Natural killer cell (primary cell): ENCODE measurements at regions of chr1 and their contacts with region 1.

Region 1: GRCh38 chr1:220046052-220046930 is at the start of gene EPRS1:
- DNase-seq: peak; percentile 90 to 99
- ATAC-seq: peak; percentile 98 to 100 (median 98)
- H3K4me3 ChIP-seq: peak within 1 kb of the TSS; percentile 98
- H3K4me3 Mint-ChIP-seq: peak within 1 kb of the TSS; percentile 98
- H3K27ac ChIP-seq: peak within 1 kb of the TSS; percentile 85
- H3K27ac Mint-ChIP-seq: peak within 1 kb of the TSS; percentile 94 to 96
- H3K4me1 ChIP-seq: peaks cover 13% of the 10 kb centered on the region
- H3K4me1 Mint-ChIP-seq: peaks cover 25 to 27% of the 10 kb centered on the region in 2 donors
- H3K27me3 ChIP-seq: no peaks in the 10 kb centered on the region
- H3K27me3 Mint-ChIP-seq: no peaks in the 10 kb centered on the region
- CTCF ChIP-seq: peak; percentile 49
- total RNA-seq, gene EPRS1: 46.8 to 61.2 (median 47.4) TPM

Region 2: GRCh38 chr1:220089650-220090556 is 43.6 kb after region 1 on chr1 and contains the start of gene BPNT1:
- intact Hi-C with region 1: loop called (anchors 1 kb)
- DNase-seq: peak; percentile 96 to 99
- ATAC-seq: peak; percentile 74 to 88 (median 76)
- H3K4me3 ChIP-seq: peak within 1 kb of the TSS; percentile 72
- H3K4me3 Mint-ChIP-seq: peak within 1 kb of the TSS; percentile 100
- H3K27ac ChIP-seq: peak within 1 kb of the TSS; percentile 79
- H3K27ac Mint-ChIP-seq: peak within 1 kb of the TSS; percentile 82 to 91
- H3K4me1 ChIP-seq: peaks cover 24% of the 10 kb centered on the region
- H3K4me1 Mint-ChIP-seq: peaks cover 10 to 15% of the 10 kb centered on the region in 2 donors
- H3K27me3 ChIP-seq: no peaks in the 10 kb centered on the region
- H3K27me3 Mint-ChIP-seq: no peaks in the 10 kb centered on the region
- CTCF ChIP-seq: no peak
- total RNA-seq, gene BPNT1: 8.8 to 11.6 (median 8.9) TPM

Region 3: GRCh38 chr1:220151454-220151853 is 105.2 kb after region 1 on chr1:
- intact Hi-C with region 1: no loop called
- DNase-seq: no peak
- ATAC-seq: no peak
- H3K4me3 ChIP-seq: no peak overlapping the region
- H3K4me3 Mint-ChIP-seq: no peak overlapping the region
- H3K27ac ChIP-seq: no peak overlapping the region
- H3K27ac Mint-ChIP-seq: no peak overlapping the region
- H3K4me1 ChIP-seq: no peaks in the 10 kb centered on the region
- H3K4me1 Mint-ChIP-seq: peaks cover 3% of the 10 kb centered on the region in 2 donors
- H3K27me3 ChIP-seq: no peaks in the 10 kb centered on the region
- H3K27me3 Mint-ChIP-seq: no peaks in the 10 kb centered on the region
- CTCF ChIP-seq: no peak

Region 4: GRCh38 chr1:220272047-220272840 is 226.0 kb after region 1 on chr1 and contains the start of gene RAB3GAP2:
- intact Hi-C with region 1: loop called (anchors 2 kb)
- DNase-seq: peak; percentile 95 to 99
- ATAC-seq: peak; percentile 94 to 97 (median 95)
- H3K4me3 ChIP-seq: peak within 1 kb of the TSS; percentile 93
- H3K4me3 Mint-ChIP-seq: no peak within 1 kb of the TSS
- H3K27ac ChIP-seq: peak within 1 kb of the TSS; percentile 91
- H3K27ac Mint-ChIP-seq: no peak within 1 kb of the TSS
- H3K4me1 ChIP-seq: peaks cover 10% of the 10 kb centered on the region
- H3K4me1 Mint-ChIP-seq: peaks cover 17 to 20% of the 10 kb centered on the region in 2 donors
- H3K27me3 ChIP-seq: no peaks in the 10 kb centered on the region
- H3K27me3 Mint-ChIP-seq: peaks cover 23 to 25% of the 10 kb centered on the region in 2 donors
- CTCF ChIP-seq: no peak
- total RNA-seq, gene RAB3GAP2: 47.3 to 52.7 (median 51.5) TPM